Ascending aorta (tissue), 2 donors: ENCODE measurements at regions of chr12 and their contacts with region 1.

Region 1: GRCh38 chr12:14948672-14949071 is 10.3 kb upstream of the ERP27 start:
- DNase-seq: peak in 1 of 2 donors; percentile 81
- H3K4me3 ChIP-seq: peak overlapping the region in 1 of 2 donors; percentile 50
- H3K27ac ChIP-seq: peak overlapping the region; percentile 91 to 96
- H3K4me1 ChIP-seq: peaks cover 9 to 56% of the 10 kb centered on the region in 2 donors
- H3K27me3 ChIP-seq: no peaks in the 10 kb centered on the region
- CTCF ChIP-seq: no peak

Region 2: DNA sequence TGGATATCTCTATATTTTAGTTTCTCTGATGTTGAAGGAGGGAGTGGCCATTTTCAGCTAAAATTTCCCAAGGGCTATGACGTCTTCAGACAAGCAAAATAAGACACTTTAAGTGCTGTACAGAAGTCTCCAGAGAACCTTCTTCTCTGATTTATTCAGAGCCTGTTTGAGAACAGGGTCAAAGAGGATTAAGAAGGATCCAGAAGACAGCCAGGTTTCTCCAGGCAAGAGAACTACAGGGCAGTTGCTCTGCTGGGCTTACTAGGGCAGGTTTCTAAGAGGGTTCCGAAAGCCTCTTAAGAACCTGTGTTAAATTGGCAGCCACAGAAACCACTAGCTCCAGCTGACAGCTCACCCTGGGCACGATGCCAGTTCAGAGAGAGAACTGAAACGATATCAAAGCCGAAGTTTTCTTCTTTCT is 64.2 kb before region 1 on chr12:
- intact Hi-C with region 1: loop called (anchors 2 kb)
- DNase-seq: peak; percentile 33 to 92
- H3K4me3 ChIP-seq: peak overlapping the region; percentile 61 to 75
- H3K27ac ChIP-seq: peak overlapping the region; percentile 86 to 87
- H3K4me1 ChIP-seq: peaks cover 0 to 5% of the 10 kb centered on the region in 2 donors
- H3K27me3 ChIP-seq: no peaks in the 10 kb centered on the region
- CTCF ChIP-seq: no peak

Region 3: GRCh38 chr12:15268927-15269552 is 320.4 kb after region 1 on chr12:
- intact Hi-C with region 1: no loop called
- DNase-seq: peak in 1 of 2 donors; percentile 69
- H3K4me3 ChIP-seq: no peak overlapping the region
- H3K27ac ChIP-seq: no peak overlapping the region
- H3K4me1 ChIP-seq: peaks cover 0 to 4% of the 10 kb centered on the region in 2 donors
- H3K27me3 ChIP-seq: no peaks in the 10 kb centered on the region
- CTCF ChIP-seq: peak; percentile 77 to 86 (median 81)